ENCODE measurements at regions of chr10 and their contacts with region 1.

Region 1: DNA sequence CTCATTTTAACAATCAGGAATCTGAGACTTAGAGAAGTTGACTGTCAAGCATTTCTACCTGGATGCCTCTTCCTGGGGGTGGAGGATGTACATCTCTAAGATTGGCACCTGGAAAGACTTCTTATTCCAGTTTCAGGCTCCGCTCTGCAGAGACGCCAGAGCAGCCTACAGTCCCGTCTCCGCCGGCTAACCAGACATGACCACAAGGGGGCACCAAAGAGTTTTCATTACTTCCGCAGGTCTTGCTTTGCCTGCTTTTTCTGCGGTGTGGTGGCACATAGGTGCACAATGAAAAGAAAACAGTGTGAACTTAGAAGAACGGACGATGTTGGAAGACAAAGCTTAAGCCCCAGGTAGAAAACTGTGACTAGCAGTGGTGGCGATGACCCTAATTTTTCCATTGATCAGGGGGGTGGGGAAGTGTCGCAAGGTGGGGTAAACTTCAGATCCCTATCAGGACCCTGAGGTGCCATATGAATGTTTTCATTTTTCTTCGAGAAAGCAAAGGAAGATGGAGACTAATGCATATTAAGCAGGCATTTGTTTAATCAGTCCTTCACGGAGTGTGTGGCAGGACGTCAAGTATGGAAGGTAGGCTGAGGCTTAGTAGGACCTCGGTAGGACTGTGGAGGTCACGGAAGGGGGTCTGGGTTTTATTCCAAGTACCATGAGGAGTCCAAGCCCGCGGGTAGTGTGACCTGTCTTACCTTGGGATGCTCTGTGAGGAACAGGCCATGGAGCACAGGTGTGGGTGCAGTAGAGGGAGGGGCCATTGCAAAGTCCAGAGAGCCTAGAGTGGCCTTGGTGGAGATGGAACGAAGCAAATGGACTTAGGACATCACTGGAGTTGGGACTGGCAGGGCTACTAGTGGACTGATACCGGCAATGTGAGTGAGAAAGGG is 60.1 kb upstream of the SORCS3 start:
- DNase-seq: peak; percentile 84
- H3K4me3 Mint-ChIP-seq: peak overlapping the region; percentile 37
- H3K27ac Mint-ChIP-seq: peak overlapping the region; percentile 65
- H3K4me1 Mint-ChIP-seq: peaks cover 28% of the 10 kb centered on the region
- H3K27me3 Mint-ChIP-seq: no peaks in the 10 kb centered on the region
- CTCF ChIP-seq: peak; percentile 67

Region 2: DNA sequence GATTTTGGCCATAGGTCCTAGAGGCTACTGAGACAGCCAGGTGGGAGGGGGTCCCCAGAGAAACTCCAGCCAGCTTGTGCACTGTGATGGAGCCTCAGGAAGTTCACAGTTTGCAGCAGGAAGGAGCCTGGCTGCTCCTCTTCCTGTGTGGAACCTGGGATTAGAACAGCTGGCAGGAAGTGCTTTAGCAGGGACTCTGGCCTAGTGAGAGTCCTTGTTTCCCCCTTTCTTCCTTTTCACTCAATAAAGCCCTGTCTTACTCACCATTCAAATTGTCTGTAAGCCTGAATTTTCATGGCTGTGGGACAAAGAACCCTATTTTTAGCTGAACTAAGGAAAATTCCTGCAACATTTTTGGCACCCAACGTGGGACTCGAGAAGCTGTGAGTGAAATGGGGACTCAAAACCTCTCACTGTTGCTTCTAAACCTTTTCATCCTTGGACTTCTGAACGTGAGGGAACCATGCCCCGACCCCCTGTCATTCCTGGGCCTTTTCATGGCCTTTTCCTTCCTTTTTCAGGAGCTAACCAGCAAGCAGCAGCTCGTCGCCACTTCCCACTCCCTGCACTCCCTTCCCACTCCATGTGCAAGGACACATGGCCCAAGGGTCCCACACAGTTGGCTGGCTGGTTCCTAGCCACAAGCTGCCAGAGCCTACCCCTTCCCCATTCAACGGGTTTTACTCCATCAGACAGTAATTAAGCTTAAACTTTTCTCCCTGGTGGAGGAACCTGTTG is 27.2 kb after region 1 on chr10:
- CTCF ChIA-PET with region 1: interaction called, 35 read pairs
- POLR2A ChIA-PET with region 1: interaction called, 4 read pairs
- intact Hi-C with region 1: no loop called
- DNase-seq: no peak
- H3K4me3 Mint-ChIP-seq: no peak overlapping the region
- H3K27ac Mint-ChIP-seq: peak overlapping the region; percentile 41
- H3K4me1 Mint-ChIP-seq: no peaks in the 10 kb centered on the region
- H3K27me3 Mint-ChIP-seq: no peaks in the 10 kb centered on the region
- CTCF ChIP-seq: no peak

Region 3: DNA sequence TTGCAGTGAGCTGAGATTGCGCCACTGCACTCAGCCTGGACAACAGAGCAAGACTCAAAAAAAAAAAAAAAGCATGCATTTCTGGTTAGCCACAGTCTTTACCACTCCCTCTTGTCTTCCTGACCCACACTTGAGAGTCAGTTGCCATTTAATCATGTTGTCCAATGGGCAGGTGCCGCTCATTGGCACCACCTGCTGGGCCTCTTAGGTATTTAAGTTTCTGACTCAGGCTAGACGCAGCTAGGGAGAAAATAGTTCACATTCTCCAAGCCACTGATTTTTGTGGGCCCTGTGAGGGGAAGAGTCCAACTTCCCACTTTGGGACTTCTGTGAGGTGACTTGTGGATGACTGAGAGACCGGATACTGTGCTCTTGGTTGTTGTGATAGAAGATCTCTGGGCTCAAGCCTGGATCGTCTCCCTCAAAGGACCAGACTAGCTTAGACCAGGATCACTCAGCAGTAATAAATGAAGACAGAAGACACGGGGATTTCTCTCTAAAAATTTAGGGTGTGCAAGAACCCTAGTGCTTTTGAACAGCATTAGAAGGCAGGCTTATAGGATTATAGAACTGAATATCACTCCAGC is 33.3 kb after region 1 on chr10:
- CTCF ChIA-PET with region 1: interaction called, 77 read pairs
- POLR2A ChIA-PET with region 1: no interaction called
- intact Hi-C with region 1: loop called (anchors 1 kb)
- DNase-seq: peak; percentile 59
- H3K4me3 Mint-ChIP-seq: no peak overlapping the region
- H3K27ac Mint-ChIP-seq: no peak overlapping the region
- H3K4me1 Mint-ChIP-seq: no peaks in the 10 kb centered on the region
- H3K27me3 Mint-ChIP-seq: no peaks in the 10 kb centered on the region
- CTCF ChIP-seq: peak; percentile 85

Region 4: DNA sequence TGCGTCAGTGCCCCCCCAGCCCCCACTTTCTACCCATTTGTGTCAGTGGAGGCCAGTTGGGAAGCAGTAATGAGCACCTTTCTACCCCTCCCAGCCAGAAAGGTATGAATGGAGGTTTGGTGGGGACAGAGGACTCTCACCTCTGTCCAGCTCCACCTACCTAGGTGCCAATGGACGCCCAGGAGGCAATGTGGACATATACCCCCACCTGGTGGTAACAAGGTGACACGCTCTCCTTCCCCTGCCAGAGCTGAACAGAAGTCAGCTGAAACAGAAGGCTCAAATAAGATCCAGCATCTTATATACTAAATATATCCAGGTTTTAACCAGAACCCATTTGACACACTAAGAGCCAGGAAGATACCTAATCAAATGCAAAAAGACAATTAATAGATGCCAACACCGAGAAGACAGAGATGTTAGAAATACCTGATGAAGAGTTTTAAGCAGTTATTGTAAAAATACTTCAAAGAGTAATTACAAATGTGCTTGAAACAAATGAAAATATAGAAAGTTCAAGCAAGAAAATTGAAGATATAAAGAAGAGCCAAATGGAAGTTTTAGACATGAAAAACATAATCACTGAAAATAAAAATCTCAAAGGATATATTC is 41.7 kb after region 1 on chr10:
- CTCF ChIA-PET with region 1: interaction called, 77 read pairs
- POLR2A ChIA-PET with region 1: no interaction called
- intact Hi-C with region 1: loop called (anchors 1 kb)
- DNase-seq: peak; percentile 67
- H3K4me3 Mint-ChIP-seq: no peak overlapping the region
- H3K27ac Mint-ChIP-seq: no peak overlapping the region
- H3K4me1 Mint-ChIP-seq: no peaks in the 10 kb centered on the region
- H3K27me3 Mint-ChIP-seq: peaks cover 41% of the 10 kb centered on the region
- CTCF ChIP-seq: peak; percentile 87